CD4-positive, alpha-beta memory T cell (primary cell): ENCODE measurements at regions of chr15 and their contacts with region 1.

Region 1: GRCh38 chr15:41603941-41604911 is 45.2 kb downstream of the TYRO3 start:
- DNase-seq: peak; percentile 53 to 58 (median 53)
- H3K4me3 ChIP-seq: peak overlapping the region in 1 of 2 donors; percentile 36
- H3K4me3 Mint-ChIP-seq: peak overlapping the region; percentile 49 to 87 (median 78)
- H3K27ac ChIP-seq: no peak overlapping the region
- H3K27ac Mint-ChIP-seq: peak overlapping the region in 1 of 7 donors; percentile 68
- H3K4me1 ChIP-seq: peaks cover 6% of the 10 kb centered on the region
- H3K4me1 Mint-ChIP-seq: peaks cover 8 to 10% (median 9%) of the 10 kb centered on the region in 4 donors
- H3K27me3 ChIP-seq: peaks cover 3% of the 10 kb centered on the region
- H3K27me3 Mint-ChIP-seq: peaks cover 13 to 15% of the 10 kb centered on the region in 2 donors

Region 2: DNA sequence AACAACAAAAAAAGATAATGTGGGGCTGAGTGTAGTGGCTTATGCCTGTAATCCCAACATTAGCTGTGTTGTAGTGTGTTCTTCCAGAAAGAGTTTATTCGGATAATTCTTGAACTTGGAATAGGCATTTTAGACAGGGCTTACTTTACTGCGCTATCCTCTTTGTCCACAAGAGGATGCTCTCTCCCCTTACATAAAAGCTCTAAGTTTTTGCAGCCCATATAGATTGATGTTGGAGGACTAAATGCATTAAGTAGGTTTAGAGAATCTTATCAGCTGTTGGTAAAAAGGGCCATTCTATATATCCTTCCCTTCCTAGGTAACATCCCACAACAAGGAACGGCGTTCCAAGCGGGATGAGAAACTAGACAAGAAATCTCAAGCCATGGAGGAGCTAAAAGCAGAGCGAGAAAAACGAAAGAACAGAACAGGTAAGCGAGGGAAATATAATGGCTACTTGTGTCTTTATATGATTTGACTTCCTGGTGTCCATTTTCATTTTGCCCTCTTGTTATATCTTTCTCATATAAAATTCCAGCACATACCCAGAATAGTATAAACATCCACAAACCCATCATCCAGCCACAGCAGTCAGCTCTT is 138.3 kb before region 1 on chr15:
- CTCF ChIA-PET with region 1: interaction called, 27 read pairs
- POLR2A ChIA-PET with region 1: no interaction called
- intact Hi-C with region 1: loop called (anchors 5 kb)
- DNase-seq: peak in 4 of 5 donors; percentile 37 to 56 (median 44)
- H3K4me3 ChIP-seq: no peak overlapping the region
- H3K4me3 Mint-ChIP-seq: no peak overlapping the region
- H3K27ac ChIP-seq: no peak overlapping the region
- H3K27ac Mint-ChIP-seq: peak overlapping the region in 3 of 7 donors; percentile 24 to 89 (median 49)
- H3K4me1 ChIP-seq: no peaks in the 10 kb centered on the region
- H3K4me1 Mint-ChIP-seq: peaks cover 0 to 7% (median 4%) of the 10 kb centered on the region in 4 donors
- H3K27me3 ChIP-seq: no peaks in the 10 kb centered on the region
- H3K27me3 Mint-ChIP-seq: no peaks in the 10 kb centered on the region

Region 3: DNA sequence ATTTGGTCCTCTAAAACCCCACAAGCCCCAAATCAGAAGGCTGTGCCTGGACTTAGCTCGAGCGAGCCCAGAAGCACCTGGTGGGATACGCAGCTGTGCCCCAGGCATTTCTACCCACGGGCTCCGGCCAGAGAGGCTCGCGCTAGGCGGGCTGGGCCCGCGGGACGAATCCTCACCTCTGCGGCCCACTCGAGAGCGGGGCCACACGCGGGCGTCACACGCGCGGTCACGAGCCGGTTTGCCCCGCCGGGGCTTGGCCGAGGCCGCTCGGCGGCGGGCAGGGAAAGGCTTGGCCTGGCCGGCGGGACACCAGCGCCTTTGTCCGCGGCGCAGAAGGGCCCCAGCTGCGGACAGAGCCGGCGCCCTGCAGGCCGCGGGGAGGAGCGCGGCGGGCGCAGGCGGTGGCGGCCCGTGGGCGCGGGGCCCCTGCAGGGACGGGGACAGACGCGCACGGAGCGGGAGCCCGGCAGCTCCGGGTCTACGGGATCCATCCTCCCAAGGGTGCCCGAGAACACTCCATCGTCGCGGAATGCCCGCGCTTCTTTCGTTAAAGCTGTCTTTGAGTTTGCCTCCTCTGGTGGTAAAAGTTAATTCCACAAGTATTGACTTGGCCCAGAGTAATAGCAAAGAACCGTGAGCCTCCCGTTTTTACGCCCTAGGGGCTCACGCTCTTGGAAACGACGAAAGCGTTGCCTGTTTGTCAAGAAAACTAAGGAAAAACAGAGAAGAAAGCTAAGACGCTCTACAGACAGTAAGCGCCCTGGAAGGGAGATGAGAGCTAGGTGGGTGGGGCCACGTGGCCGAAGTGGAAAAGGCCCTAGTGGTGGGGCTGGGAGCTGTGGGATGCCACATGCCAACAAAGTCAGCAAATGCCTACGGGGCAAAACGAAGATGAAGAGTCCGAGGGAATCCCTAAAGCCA is 18.8 kb before region 1 on chr15:
- CTCF ChIA-PET with region 1: interaction called, 11 read pairs
- POLR2A ChIA-PET with region 1: no interaction called
- intact Hi-C with region 1: no loop called
- DNase-seq: peak; percentile 25 to 58 (median 30)
- H3K4me3 ChIP-seq: no peak overlapping the region
- H3K4me3 Mint-ChIP-seq: peak overlapping the region; percentile 76 to 86 (median 83)
- H3K27ac ChIP-seq: no peak overlapping the region
- H3K27ac Mint-ChIP-seq: peak overlapping the region in 1 of 7 donors; percentile 47
- H3K4me1 ChIP-seq: peaks cover 4% of the 10 kb centered on the region
- H3K4me1 Mint-ChIP-seq: peaks cover 5 to 11% (median 5%) of the 10 kb centered on the region in 4 donors
- H3K27me3 ChIP-seq: peaks cover 5% of the 10 kb centered on the region
- H3K27me3 Mint-ChIP-seq: peaks cover 24 to 29% of the 10 kb centered on the region in 2 donors

Region 4: GRCh38 chr15:41695750-41696426 is 91.7 kb after region 1 on chr15:
- CTCF ChIA-PET with region 1: interaction called, 6 read pairs
- POLR2A ChIA-PET with region 1: no interaction called
- intact Hi-C with region 1: loop called (anchors 2 kb)
- DNase-seq: peak; percentile 45 to 67 (median 52)
- H3K4me3 ChIP-seq: no peak overlapping the region
- H3K4me3 Mint-ChIP-seq: peak overlapping the region; percentile 2 to 73 (median 54)
- H3K27ac ChIP-seq: peak overlapping the region; percentile 11
- H3K27ac Mint-ChIP-seq: peak overlapping the region; percentile 6 to 92 (median 77)
- H3K4me1 ChIP-seq: peaks cover 23% of the 10 kb centered on the region
- H3K4me1 Mint-ChIP-seq: peaks cover 34 to 54% (median 44%) of the 10 kb centered on the region in 4 donors
- H3K27me3 ChIP-seq: no peaks in the 10 kb centered on the region
- H3K27me3 Mint-ChIP-seq: no peaks in the 10 kb centered on the region

Region 5: GRCh38 chr15:41727143-41727542 is 122.9 kb after region 1 on chr15:
- CTCF ChIA-PET with region 1: interaction called, 10 read pairs
- POLR2A ChIA-PET with region 1: no interaction called
- intact Hi-C with region 1: no loop called
- DNase-seq: no peak
- H3K4me3 ChIP-seq: no peak overlapping the region
- H3K4me3 Mint-ChIP-seq: no peak overlapping the region
- H3K27ac ChIP-seq: no peak overlapping the region
- H3K27ac Mint-ChIP-seq: no peak overlapping the region
- H3K4me1 ChIP-seq: no peaks in the 10 kb centered on the region
- H3K4me1 Mint-ChIP-seq: peaks cover 0 to 8% (median 1%) of the 10 kb centered on the region in 4 donors
- H3K27me3 ChIP-seq: no peaks in the 10 kb centered on the region
- H3K27me3 Mint-ChIP-seq: no peaks in the 10 kb centered on the region